Ovary (tissue), 10 donors: ENCODE measurements at regions of chr10 and their contacts with region 1.

Region 1: GRCh38 chr10:6202684-6203330 is at the start of gene PFKFB3:
- DNase-seq: peak; percentile 96 to 98 (median 97)
- H3K4me3 ChIP-seq: peak within 1 kb of the TSS; percentile 83
- H3K27ac ChIP-seq: peak within 1 kb of the TSS; percentile 87 to 89
- H3K4me1 ChIP-seq: peaks cover 12% of the 10 kb centered on the region
- H3K27me3 ChIP-seq: no peaks in the 10 kb centered on the region
- CTCF ChIP-seq: peak; percentile 94 to 99 (median 98)
- EP300 ChIP-seq: peak; percentile 38
- POLR2A ChIP-seq: peak; percentile 96
- total RNA-seq, gene PFKFB3: 28.7 to 60.8 (median 41.6) TPM

Region 2: DNA sequence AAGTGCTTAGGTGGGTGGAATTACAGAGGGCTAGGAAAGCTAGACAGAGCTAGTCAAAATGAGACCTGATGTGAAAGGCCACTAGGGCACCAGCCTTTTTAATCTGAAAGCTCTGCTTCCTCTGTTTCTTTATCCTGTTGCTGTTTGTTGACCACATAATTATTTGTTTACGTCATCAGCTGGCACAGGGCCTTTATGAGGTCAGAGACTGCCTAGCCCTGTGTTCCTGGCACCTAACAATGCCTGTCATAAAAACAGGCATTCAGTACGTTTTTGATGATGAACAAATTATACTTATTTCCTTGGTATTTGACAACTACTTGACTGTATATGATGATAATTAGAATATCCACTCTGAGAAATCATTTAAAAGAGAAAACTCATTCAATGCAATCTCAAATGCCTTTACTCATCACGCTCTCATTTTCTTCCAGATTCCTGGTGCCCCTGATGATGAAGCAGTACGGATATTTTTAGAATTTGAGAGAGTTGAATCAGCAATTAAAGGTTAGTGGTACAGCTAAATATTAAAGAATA is 87.9 kb before region 1 on chr10:
- intact Hi-C with region 1: loop called in 3 of 4 experiments (anchors 5 to 10 kb)
- DNase-seq: no peak
- H3K4me3 ChIP-seq: no peak overlapping the region
- H3K27ac ChIP-seq: peak overlapping the region in 1 of 2 donors; percentile 16
- H3K4me1 ChIP-seq: no peaks in the 10 kb centered on the region
- H3K27me3 ChIP-seq: no peaks in the 10 kb centered on the region
- CTCF ChIP-seq: no peak
- EP300 ChIP-seq: no peak
- POLR2A ChIP-seq: no peak

Region 3: DNA sequence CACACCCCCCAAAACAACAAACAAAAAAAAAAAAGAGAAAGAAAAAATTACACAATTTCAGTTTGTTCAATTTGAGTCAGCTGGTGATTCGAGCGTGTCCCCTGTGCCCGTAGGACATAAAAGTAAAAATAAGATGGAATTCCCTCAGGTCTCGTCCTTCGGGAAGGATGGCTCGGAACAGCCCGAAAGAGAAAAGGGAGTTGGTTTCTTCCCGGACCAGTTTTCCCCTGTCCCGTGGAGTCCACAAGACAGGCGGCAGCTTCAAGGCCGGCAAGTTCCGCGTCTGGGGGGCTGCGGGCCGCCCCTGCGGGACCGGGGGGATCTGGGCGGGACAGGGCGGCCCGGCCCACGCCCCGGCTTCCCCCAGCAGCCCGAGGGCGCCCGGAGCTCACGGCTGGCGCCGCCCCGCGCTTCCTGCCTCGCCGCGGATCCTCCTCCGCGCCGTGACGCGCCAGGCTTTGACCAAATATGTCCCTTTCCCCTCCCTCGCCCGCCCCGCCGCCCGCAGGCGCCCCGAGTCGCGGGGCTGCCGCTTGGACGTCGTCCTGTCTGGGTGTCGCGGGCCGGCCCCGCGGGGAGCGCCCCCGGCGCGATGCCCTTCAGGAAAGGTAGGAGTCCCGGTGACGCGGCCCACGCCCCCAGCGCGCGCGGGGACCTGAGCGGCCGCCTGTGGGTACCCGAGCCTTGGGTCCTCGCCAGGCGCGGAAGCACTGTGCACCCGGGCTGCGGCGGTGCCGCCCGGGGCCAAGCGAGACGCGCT is 58.2 kb before region 1 on chr10:
- intact Hi-C with region 1: loop called in 1 of 4 experiments (anchors 10 kb)
- DNase-seq: peak; percentile 90 to 94 (median 91)
- H3K4me3 ChIP-seq: peak overlapping the region; percentile 59
- H3K27ac ChIP-seq: peak overlapping the region; percentile 90 to 92
- H3K4me1 ChIP-seq: peaks cover 9% of the 10 kb centered on the region
- H3K27me3 ChIP-seq: no peaks in the 10 kb centered on the region
- CTCF ChIP-seq: peak in 1 of 3 donors; percentile 36
- EP300 ChIP-seq: no peak
- POLR2A ChIP-seq: peak; percentile 67

Region 4: GRCh38 chr10:6163364-6164270 is 39.2 kb before region 1 on chr10:
- intact Hi-C with region 1: loop called in 2 of 4 experiments (anchors 2 kb)
- DNase-seq: peak; percentile 89 to 96 (median 93)
- H3K4me3 ChIP-seq: peak overlapping the region; percentile 75
- H3K27ac ChIP-seq: peak overlapping the region; percentile 77 to 88
- H3K4me1 ChIP-seq: peaks cover 5% of the 10 kb centered on the region
- H3K27me3 ChIP-seq: no peaks in the 10 kb centered on the region
- CTCF ChIP-seq: no peak
- EP300 ChIP-seq: no peak
- POLR2A ChIP-seq: peak; percentile 80

Region 5: GRCh38 chr10:6401562-6402348 is 198.9 kb after region 1 on chr10:
- intact Hi-C with region 1: loop called in 3 of 4 experiments (anchors 2 to 5 kb)
- DNase-seq: peak; percentile 68 to 79 (median 70)
- H3K4me3 ChIP-seq: peak overlapping the region; percentile 13
- H3K27ac ChIP-seq: no peak overlapping the region
- H3K4me1 ChIP-seq: peaks cover 2% of the 10 kb centered on the region
- H3K27me3 ChIP-seq: no peaks in the 10 kb centered on the region
- CTCF ChIP-seq: peak; percentile 29 to 79 (median 71)
- EP300 ChIP-seq: no peak
- POLR2A ChIP-seq: no peak

Region 6: GRCh38 chr10:7218968-7219367 is 1016.2 kb after region 1 on chr10:
- intact Hi-C with region 1: no loop called
- DNase-seq: no peak
- H3K4me3 ChIP-seq: no peak overlapping the region
- H3K27ac ChIP-seq: no peak overlapping the region
- H3K4me1 ChIP-seq: no peaks in the 10 kb centered on the region
- H3K27me3 ChIP-seq: no peaks in the 10 kb centered on the region
- CTCF ChIP-seq: no peak
- EP300 ChIP-seq: no peak
- POLR2A ChIP-seq: no peak